Heart right ventricle (tissue), 16 donors: ENCODE measurements at regions of chr1 and their contacts with region 1.

Region 1: GRCh38 chr1:205523891-205524793 is 19.7 kb downstream of the CDK18 start:
- DNase-seq: peak; percentile 80 to 84
- ATAC-seq: peak; percentile 35 to 71 (median 50)
- H3K4me3 ChIP-seq: no peak overlapping the region
- H3K27ac ChIP-seq: peak overlapping the region in 1 of 10 donors; percentile 55
- H3K4me1 ChIP-seq: peaks cover 21 to 85% (median 59%) of the 10 kb centered on the region in 9 donors
- H3K27me3 ChIP-seq: no peaks in the 10 kb centered on the region
- CTCF ChIP-seq: peak; percentile 56 to 88 (median 83)

Region 2: GRCh38 chr1:205480349-205480985 is 43.7 kb before region 1 on chr1:
- intact Hi-C with region 1: no loop called
- DNase-seq: no peak
- ATAC-seq: no peak
- H3K4me3 ChIP-seq: no peak overlapping the region
- H3K27ac ChIP-seq: no peak overlapping the region
- H3K4me1 ChIP-seq: peaks cover 0 to 13% (median 4%) of the 10 kb centered on the region in 9 donors
- H3K27me3 ChIP-seq: peaks cover 0 to 64% (median 33%) of the 10 kb centered on the region in 7 donors
- CTCF ChIP-seq: no peak

Region 3: GRCh38 chr1:205493241-205494085 is 30.7 kb before region 1 on chr1:
- intact Hi-C with region 1: loop called in 9 of 10 experiments (anchors 1 to 2 kb)
- DNase-seq: peak in 1 of 2 donors; percentile 34
- ATAC-seq: peak; percentile 21 to 75 (median 50)
- H3K4me3 ChIP-seq: no peak overlapping the region
- H3K27ac ChIP-seq: peak overlapping the region in 9 of 10 donors; percentile 10 to 62 (median 35)
- H3K4me1 ChIP-seq: peaks cover 9 to 55% (median 26%) of the 10 kb centered on the region in 9 donors
- H3K27me3 ChIP-seq: peaks cover 0 to 3% (median 0%) of the 10 kb centered on the region in 7 donors
- CTCF ChIP-seq: no peak

Region 4: GRCh38 chr1:205849619-205850355 is 325.6 kb after region 1 on chr1 and contains the start of gene PM20D1:
- intact Hi-C with region 1: no loop called
- DNase-seq: peak; percentile 56 to 94
- ATAC-seq: peak; percentile 92 to 100 (median 98)
- H3K4me3 ChIP-seq: peak within 1 kb of the TSS; percentile 10 to 62 (median 50)
- H3K27ac ChIP-seq: peak within 1 kb of the TSS in 3 of 10 donors; percentile 34 to 52 (median 51)
- H3K4me1 ChIP-seq: peaks cover 0 to 9% (median 0%) of the 10 kb centered on the region in 9 donors
- H3K27me3 ChIP-seq: peaks cover 0 to 9% (median 0%) of the 10 kb centered on the region in 7 donors
- CTCF ChIP-seq: no peak
- total RNA-seq, gene PM20D1: 0.12 to 1.9 (median 0.66) TPM